Gastrocnemius medialis (tissue), 4 donors: ENCODE measurements at regions of chr4 and their contacts with region 1.

Region 1: DNA sequence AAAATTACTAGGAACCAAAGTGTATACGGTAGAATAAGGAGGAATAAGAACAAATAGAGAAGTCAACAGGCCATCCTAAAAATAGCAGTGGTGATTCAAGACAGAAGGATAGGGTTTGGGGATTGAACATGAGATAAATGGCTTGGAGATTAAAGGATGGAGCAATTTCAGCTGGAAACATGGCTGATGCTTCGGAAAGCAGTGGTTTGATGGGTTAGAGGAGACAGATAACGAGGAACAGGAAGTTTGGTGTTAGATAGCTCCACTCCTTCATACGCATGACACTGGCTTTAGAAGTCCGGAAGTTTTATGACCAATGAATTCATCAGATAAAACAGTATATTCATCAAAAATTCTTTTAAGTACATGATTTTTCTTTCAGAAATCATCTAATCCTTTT is 70.8 kb upstream of the GALNTL6 start:
- DNase-seq: no peak
- ATAC-seq: no peak
- H3K4me3 ChIP-seq: no peak overlapping the region
- H3K27ac ChIP-seq: no peak overlapping the region
- H3K4me1 ChIP-seq: no peaks in the 10 kb centered on the region
- H3K27me3 ChIP-seq: no peaks in the 10 kb centered on the region
- CTCF ChIP-seq: no peak
- POLR2A ChIP-seq: no peak

Region 2: DNA sequence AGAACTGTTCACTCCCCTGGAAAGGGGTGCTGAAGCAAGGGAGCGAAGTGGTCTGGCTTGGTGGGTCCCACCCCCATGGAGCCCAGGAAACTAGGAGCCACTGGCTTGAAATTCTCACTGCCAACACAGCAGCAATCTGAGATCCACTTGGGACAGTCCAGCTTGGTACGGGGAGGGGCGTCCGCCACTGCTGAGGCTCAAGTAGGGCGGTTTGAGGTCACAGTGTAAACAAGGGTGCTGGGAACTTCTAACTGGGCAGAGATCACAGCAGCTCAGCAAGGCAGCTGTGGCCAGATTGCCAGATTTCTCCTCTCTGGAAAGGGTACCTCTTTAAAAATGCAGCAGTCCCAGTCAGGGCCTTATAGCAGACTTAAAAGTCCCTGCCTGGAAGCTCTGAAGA is 16.8 kb after region 1 on chr4:
- in situ Hi-C with region 1: no loop called
- intact Hi-C with region 1: no loop called
- DNase-seq: no peak
- ATAC-seq: no peak
- H3K4me3 ChIP-seq: no peak overlapping the region
- H3K27ac ChIP-seq: no peak overlapping the region
- H3K4me1 ChIP-seq: no peaks in the 10 kb centered on the region
- H3K27me3 ChIP-seq: no peaks in the 10 kb centered on the region
- CTCF ChIP-seq: no peak
- POLR2A ChIP-seq: no peak

Region 3: DNA sequence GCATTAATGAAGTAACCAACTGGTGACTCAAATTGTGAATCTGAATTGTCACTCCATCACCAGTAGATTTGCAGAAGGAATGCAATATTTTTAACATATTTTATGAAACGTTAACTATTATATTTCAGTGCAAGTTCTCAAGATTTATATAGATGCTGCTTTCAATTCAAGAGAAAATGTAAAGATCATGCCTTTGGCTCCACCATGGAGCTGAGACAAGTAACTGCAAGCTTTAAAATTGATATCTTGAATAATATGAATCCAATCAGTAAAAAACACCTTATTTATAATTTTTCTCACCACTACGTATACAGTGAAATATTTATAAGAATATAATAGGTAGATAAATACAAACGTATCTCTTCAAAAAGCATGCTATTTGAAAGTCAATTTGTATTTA is 43.0 kb after region 1 on chr4:
- in situ Hi-C with region 1: no loop called
- intact Hi-C with region 1: loop called (anchors 2 kb)
- DNase-seq: no peak
- ATAC-seq: no peak
- H3K4me3 ChIP-seq: no peak overlapping the region
- H3K27ac ChIP-seq: no peak overlapping the region
- H3K4me1 ChIP-seq: no peaks in the 10 kb centered on the region
- H3K27me3 ChIP-seq: no peaks in the 10 kb centered on the region
- CTCF ChIP-seq: no peak
- POLR2A ChIP-seq: no peak